Naive thymus-derived CD8-positive, alpha-beta T cell (primary cell): ENCODE measurements at regions of chr2 and their contacts with region 1.

Region 1: DNA sequence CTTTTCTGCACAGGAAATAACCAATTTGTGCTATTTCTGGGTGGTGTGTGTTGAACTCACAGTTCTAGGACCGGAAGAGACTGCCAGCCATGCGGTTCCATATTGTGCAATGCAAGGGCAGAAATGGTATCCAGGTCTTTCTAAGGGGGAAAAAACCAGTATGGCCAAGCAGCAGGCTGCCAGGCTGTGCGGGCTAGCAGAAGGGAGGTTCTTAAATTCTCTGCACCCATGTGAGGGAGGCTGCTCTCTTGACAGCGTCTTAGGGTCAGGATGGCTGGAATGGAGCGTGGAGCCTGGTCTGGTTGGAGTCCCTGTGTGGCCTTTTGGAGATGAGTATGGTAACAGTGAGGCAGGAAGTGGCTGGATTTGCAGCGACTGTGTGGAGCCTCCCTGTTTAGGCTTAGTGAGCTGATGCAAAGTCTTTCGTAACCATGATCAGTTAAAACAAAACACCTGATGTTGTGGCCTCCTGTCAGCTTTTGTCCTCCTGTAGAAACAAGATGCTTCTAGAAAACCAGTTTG is 52.6 kb downstream of the NCK2 start:
- DNase-seq: peak in 4 of 10 donors; percentile 20 to 56 (median 54)
- ATAC-seq: peak; percentile 5 to 9
- H3K4me3 Mint-ChIP-seq: peak overlapping the region; percentile 64 to 94 (median 85)
- H3K27ac Mint-ChIP-seq: peak overlapping the region; percentile 96 to 100 (median 98)
- H3K4me1 Mint-ChIP-seq: peaks cover 55 to 96% (median 91%) of the 10 kb centered on the region in 4 donors
- H3K27me3 Mint-ChIP-seq: no peaks in the 10 kb centered on the region

Region 2: GRCh38 chr2:105732101-105732500 is 65.3 kb before region 1 on chr2:
- POLR2A ChIA-PET with region 1: no interaction called
- DNase-seq: no peak
- ATAC-seq: no peak
- H3K4me3 Mint-ChIP-seq: no peak overlapping the region
- H3K27ac Mint-ChIP-seq: peak overlapping the region in 1 of 10 donors; percentile 63
- H3K4me1 Mint-ChIP-seq: peaks cover 23 to 55% (median 36%) of the 10 kb centered on the region in 4 donors
- H3K27me3 Mint-ChIP-seq: no peaks in the 10 kb centered on the region

Region 3: GRCh38 chr2:105782123-105782522 is 15.2 kb before region 1 on chr2:
- POLR2A ChIA-PET with region 1: interaction called, 13 read pairs
- DNase-seq: peak in 2 of 10 donors; percentile 41 to 43
- ATAC-seq: peak in 1 of 2 donors; percentile 38
- H3K4me3 Mint-ChIP-seq: peak overlapping the region; percentile 70 to 91 (median 82)
- H3K27ac Mint-ChIP-seq: peak overlapping the region; percentile 93 to 97 (median 95)
- H3K4me1 Mint-ChIP-seq: peaks cover 57 to 98% (median 95%) of the 10 kb centered on the region in 4 donors
- H3K27me3 Mint-ChIP-seq: no peaks in the 10 kb centered on the region

Region 4: GRCh38 chr2:105858868-105859693 is 61.7 kb after region 1 on chr2:
- POLR2A ChIA-PET with region 1: interaction called, 16 read pairs
- DNase-seq: no peak
- ATAC-seq: peak in 1 of 2 donors; percentile 29
- H3K4me3 Mint-ChIP-seq: peak overlapping the region; percentile 16 to 88 (median 76)
- H3K27ac Mint-ChIP-seq: peak overlapping the region; percentile 80 to 99 (median 95)
- H3K4me1 Mint-ChIP-seq: peaks cover 50 to 96% (median 94%) of the 10 kb centered on the region in 4 donors
- H3K27me3 Mint-ChIP-seq: no peaks in the 10 kb centered on the region